Tibial artery (tissue), 4 donors: ENCODE measurements at regions of chr7 and their contacts with region 1.

Region 1: GRCh38 chr7:74449809-74450397 is 3.8 kb upstream of the GTF2IRD1 start:
- DNase-seq: peak in 1 of 2 donors; percentile 51
- H3K4me3 ChIP-seq: no peak overlapping the region
- H3K27ac ChIP-seq: no peak overlapping the region
- H3K4me1 ChIP-seq: peaks cover 0 to 21% (median 16%) of the 10 kb centered on the region in 4 donors
- H3K27me3 ChIP-seq: no peaks in the 10 kb centered on the region
- CTCF ChIP-seq: peak; percentile 82 to 87

Region 2: DNA sequence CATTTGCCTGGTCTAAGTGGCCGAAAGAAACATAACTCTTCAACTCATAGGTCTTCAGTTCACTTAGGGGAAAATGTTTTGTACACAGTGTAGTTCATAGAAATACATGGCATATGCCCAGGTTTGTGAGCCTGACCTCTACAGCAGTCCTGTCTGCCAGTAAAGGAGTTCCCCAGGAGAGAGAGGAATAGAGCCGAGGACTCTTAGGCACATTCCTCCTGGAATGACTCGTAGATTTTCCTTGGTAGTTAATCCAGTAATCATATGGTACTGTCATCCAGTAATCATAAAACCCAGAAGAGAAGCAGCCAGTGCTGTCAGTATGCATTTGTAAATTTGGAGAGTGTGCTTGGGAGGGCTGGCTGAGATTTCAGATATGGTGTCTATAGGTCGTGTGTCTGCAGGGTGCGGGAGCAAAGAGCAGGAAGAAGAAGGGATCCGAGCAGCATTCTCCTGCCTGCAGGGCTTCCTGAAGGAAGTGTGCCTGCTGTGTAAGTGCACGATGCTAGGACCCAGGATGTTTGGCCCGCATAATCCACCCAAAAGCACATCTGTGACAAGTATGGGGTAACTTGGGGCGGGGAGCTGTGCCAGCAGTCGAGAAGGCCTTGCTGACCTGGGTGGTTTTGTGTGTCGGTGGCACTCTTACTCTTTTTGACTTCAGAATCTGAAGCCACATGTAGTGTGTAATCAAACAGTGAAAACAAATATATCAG is 261.8 kb before region 1 on chr7:
- intact Hi-C with region 1: no loop called
- DNase-seq: no peak
- H3K4me3 ChIP-seq: no peak overlapping the region
- H3K27ac ChIP-seq: no peak overlapping the region
- H3K4me1 ChIP-seq: peaks cover 0 to 59% (median 45%) of the 10 kb centered on the region in 4 donors
- H3K27me3 ChIP-seq: no peaks in the 10 kb centered on the region
- CTCF ChIP-seq: no peak

Region 3: DNA sequence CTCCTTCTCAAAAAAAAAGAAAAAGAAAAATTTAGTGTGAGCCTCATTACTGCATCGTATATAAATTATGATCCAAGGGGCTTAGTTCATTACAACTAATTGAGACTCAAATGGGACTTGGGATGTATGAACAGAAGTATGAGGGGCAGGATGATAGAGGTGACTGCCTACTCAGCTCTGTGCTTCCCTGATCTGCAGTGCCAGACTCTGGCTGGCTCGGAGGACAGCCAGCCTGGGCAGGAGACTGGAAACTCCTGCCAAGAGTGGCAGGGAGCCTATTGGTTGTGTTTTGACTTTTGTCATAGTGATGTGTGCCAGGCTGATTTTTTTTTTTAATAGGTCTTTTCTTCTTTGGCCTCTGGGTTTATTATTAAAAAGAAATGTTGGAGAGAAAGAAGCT is 70.0 kb before region 1 on chr7:
- intact Hi-C with region 1: no loop called
- DNase-seq: peak; percentile 32 to 78
- H3K4me3 ChIP-seq: no peak overlapping the region
- H3K27ac ChIP-seq: peak overlapping the region in 1 of 2 donors; percentile 43
- H3K4me1 ChIP-seq: peaks cover 0 to 7% (median 6%) of the 10 kb centered on the region in 4 donors
- H3K27me3 ChIP-seq: no peaks in the 10 kb centered on the region
- CTCF ChIP-seq: no peak

Region 4: DNA sequence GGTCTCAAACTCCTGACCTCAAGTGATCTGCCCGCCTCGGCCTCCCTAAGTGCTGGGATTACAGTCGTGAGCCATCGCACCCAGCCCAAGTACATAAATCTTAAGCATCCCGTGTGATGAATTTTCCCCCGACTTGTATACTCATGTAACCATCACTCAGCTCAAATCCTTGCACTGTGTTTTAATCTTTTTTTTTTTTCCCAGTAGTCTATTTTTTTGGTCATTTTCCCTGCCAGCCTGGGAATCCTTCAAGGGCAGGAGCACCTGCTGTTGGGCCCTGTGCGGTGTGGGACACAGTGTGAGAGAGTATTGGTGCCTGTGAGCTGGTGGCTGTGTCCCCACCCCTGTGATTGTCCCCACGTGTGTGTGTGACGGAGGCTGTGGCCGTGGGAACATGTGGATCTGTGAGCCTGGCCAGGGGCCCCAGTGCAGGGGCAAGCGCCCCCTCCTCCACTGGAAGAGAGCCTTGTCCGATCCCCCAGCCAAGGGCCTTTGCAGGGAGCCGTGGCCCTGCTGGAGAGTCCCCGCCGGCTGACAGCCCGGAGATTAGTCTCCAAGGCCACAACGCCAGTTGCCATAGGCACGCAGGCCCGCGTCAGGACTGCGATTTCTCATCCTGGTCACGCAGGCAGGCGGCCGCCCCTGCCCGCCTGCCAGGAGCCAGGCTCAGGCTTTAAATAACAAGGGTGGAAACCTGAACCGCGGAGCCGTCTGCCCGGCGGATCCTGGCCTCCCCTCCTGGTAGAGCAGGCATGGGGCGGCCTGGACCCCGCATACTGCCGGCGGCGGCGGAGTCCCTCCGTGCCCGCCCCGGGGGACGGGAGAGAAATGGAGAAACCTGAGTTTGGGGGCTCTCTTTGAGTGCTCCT is 30.3 kb after region 1 on chr7:
- intact Hi-C with region 1: loop called (anchors 2 kb)
- DNase-seq: peak; percentile 86 to 97
- H3K4me3 ChIP-seq: peak overlapping the region; percentile 45 to 47
- H3K27ac ChIP-seq: peak overlapping the region; percentile 87 to 98
- H3K4me1 ChIP-seq: peaks cover 15 to 89% (median 69%) of the 10 kb centered on the region in 4 donors
- H3K27me3 ChIP-seq: no peaks in the 10 kb centered on the region
- CTCF ChIP-seq: peak in 1 of 2 experiments; percentile 7

Region 5: GRCh38 chr7:74535951-74536356 is 86.1 kb after region 1 on chr7:
- intact Hi-C with region 1: loop called (anchors 10 kb)
- DNase-seq: no peak
- H3K4me3 ChIP-seq: no peak overlapping the region
- H3K27ac ChIP-seq: no peak overlapping the region
- H3K4me1 ChIP-seq: no peaks in the 10 kb centered on the region
- H3K27me3 ChIP-seq: no peaks in the 10 kb centered on the region
- CTCF ChIP-seq: no peak

Region 6: GRCh38 chr7:74575138-74575727 is 125.3 kb after region 1 on chr7:
- intact Hi-C with region 1: no loop called
- DNase-seq: no peak
- H3K4me3 ChIP-seq: no peak overlapping the region
- H3K27ac ChIP-seq: no peak overlapping the region
- H3K4me1 ChIP-seq: peaks cover 0 to 18% (median 8%) of the 10 kb centered on the region in 4 donors
- H3K27me3 ChIP-seq: no peaks in the 10 kb centered on the region
- CTCF ChIP-seq: no peak

Region 7: DNA sequence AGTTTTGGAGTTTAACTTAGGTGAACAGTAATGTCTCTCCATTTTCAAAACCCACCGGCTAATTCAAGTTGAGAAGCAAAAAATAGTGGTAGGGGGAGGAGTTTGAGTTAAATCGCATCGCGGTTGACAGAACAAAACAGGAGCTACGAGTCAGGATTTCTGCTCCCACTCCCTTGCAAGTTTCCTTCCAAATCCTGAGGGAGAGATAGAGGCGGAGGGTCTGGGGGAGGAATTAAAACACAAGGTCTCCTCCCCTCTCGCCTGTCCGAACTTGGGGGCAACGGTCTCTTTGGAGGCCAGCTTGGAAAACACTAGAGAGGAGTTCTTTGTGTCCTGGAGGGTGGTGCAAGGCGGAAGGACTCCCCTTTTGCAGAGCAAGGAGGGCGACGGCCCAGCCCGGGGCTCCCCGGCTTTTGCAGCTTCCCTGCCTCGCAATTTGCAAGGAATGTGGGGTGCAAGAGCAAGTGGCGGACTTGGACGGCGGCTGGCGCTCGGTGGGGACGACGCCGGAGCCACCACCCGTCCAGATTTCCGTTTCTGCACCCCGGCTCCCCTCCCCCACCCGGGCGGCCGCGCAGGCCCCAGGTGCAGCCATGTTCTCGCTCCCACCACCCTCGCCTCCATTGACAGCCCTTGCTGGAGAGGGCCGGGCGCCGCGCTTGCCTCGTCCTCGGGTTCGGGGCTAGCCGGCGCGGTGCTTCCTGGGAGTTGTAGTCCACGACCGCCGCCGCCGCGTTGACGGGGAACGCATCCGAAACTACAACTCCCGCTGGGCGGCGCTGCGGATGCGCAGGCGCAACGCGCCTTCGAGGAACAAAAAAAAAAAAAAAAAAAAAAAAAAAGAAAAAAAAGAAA is 207.2 kb after region 1 on chr7:
- intact Hi-C with region 1: loop called (anchors 10 kb)
- DNase-seq: peak; percentile 98
- H3K4me3 ChIP-seq: peak overlapping the region; percentile 76 to 98
- H3K27ac ChIP-seq: peak overlapping the region; percentile 94 to 95
- H3K4me1 ChIP-seq: peaks cover 0 to 36% (median 29%) of the 10 kb centered on the region in 4 donors
- H3K27me3 ChIP-seq: no peaks in the 10 kb centered on the region
- CTCF ChIP-seq: no peak

Region 8: DNA sequence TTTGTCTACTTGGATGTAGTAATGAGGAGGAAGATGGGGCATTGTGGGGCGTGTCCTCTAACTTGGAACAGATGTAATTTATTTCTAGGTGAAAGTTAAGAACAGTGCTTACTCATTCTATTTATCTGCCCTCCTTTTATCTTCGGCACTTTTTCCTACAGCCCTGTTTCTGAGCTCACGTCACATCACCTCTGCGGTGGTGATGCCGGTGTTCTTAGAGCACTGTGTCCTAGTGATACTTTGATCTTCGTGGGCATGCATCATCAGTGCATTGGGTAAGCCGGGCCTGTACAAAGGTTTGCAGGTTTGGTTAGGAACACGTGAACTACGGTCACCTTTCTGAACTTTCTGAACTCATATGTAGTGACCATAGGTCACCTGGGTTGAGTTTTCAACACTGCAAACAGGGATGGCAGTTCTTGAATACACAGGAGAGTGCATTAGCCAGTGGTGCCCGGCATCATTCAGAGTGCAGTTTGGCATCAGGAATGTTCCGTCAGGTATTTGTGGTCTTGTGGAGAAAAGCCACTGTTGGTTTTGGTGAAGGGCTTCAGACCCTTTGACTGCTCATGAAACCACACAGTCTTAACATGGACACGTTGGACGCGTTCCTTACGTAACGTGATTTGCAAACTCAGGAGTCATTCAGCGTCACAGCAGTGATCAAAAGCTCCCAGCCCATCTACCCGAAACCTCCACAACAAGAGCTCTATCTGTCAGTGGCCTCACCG is 1470.7 kb after region 1 on chr7:
- intact Hi-C with region 1: no loop called
- DNase-seq: no peak
- H3K4me3 ChIP-seq: no peak overlapping the region
- H3K27ac ChIP-seq: no peak overlapping the region
- H3K4me1 ChIP-seq: peaks cover 0 to 36% (median 13%) of the 10 kb centered on the region in 4 donors
- H3K27me3 ChIP-seq: no peaks in the 10 kb centered on the region
- CTCF ChIP-seq: no peak